Uterus (tissue), 4 donors: ENCODE measurements at regions of chr2 and their contacts with region 1.

Region 1: GRCh38 chr2:36355151-36355889 is at the start of gene CRIM1:
- DNase-seq: peak; percentile 88 to 89
- H3K4me3 ChIP-seq: peak within 1 kb of the TSS; percentile 62 to 87
- H3K27ac ChIP-seq: peak within 1 kb of the TSS; percentile 93 to 96
- H3K4me1 ChIP-seq: peaks cover 0 to 10% of the 10 kb centered on the region in 2 donors
- H3K27me3 ChIP-seq: no peaks in the 10 kb centered on the region
- CTCF ChIP-seq: no peak
- POLR2A ChIP-seq: peak; percentile 93 to 96
- total RNA-seq, gene CRIM1: 51.2 to 168 (median 66.6) TPM

Region 2: GRCh38 chr2:36441816-36442215 is 86.5 kb after region 1 on chr2:
- intact Hi-C with region 1: loop called (anchors 10 kb)
- DNase-seq: peak in 1 of 2 donors; percentile 31
- H3K4me3 ChIP-seq: no peak overlapping the region
- H3K27ac ChIP-seq: peak overlapping the region; percentile 66 to 73
- H3K4me1 ChIP-seq: peaks cover 0 to 10% of the 10 kb centered on the region in 2 donors
- H3K27me3 ChIP-seq: no peaks in the 10 kb centered on the region
- CTCF ChIP-seq: no peak
- POLR2A ChIP-seq: no peak

Region 3: DNA sequence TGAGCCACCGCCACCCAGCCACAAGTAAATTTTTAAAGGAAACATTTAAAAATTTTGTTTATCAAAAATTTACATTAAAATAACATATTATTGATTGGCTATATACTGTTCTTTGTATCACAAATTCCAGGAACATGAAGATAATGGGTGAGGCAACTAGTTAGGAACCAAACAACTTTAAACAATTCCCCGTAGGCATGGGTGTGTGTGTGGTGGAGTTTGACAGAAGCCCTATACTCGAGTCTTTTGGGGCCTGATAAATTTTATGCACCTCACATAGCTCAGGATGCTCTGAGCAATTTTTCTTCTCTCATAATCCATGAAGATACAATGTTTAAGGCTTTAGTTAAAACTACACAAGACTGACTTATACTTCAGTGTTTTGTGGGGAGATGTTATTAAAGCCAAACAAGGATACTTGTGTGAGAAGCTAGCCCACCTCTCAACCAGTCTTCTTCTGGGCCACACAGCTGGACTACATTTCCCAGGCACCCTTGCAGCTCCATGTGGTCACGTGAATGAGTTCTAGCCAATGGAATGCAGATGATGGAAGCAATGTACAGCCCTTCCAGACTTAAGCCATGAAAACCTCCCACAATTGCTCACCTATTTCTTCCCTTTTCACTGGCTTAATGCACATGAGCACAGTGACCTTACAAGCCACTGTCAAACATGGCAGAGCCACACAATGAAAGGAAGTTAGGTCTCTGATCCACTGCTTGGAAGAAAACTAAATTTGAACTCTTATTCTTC is 262.9 kb after region 1 on chr2:
- intact Hi-C with region 1: no loop called
- DNase-seq: no peak
- H3K4me3 ChIP-seq: no peak overlapping the region
- H3K27ac ChIP-seq: no peak overlapping the region
- H3K4me1 ChIP-seq: no peaks in the 10 kb centered on the region
- H3K27me3 ChIP-seq: no peaks in the 10 kb centered on the region
- CTCF ChIP-seq: no peak
- POLR2A ChIP-seq: no peak

Region 4: DNA sequence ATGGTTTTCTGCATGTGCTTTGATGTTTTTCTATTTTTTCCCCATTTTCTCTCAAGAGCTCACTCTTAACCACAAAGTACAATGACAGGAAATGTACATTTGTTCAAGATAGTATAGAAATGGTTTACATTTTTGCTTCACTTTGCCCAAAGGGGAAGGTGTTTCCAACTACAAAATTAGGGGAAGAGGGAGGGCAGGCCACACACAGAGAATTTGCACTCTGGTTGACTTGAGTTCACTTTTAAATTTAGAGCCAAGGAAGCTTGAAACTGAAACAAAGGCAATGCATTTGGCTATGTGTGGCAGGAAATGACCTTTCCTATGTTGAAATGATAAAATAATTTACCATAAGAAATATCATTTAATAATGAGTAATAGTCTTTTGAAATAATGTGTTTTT is 322.1 kb after region 1 on chr2:
- intact Hi-C with region 1: no loop called
- DNase-seq: no peak
- H3K4me3 ChIP-seq: no peak overlapping the region
- H3K27ac ChIP-seq: no peak overlapping the region
- H3K4me1 ChIP-seq: no peaks in the 10 kb centered on the region
- H3K27me3 ChIP-seq: no peaks in the 10 kb centered on the region
- CTCF ChIP-seq: no peak
- POLR2A ChIP-seq: no peak

Region 5: DNA sequence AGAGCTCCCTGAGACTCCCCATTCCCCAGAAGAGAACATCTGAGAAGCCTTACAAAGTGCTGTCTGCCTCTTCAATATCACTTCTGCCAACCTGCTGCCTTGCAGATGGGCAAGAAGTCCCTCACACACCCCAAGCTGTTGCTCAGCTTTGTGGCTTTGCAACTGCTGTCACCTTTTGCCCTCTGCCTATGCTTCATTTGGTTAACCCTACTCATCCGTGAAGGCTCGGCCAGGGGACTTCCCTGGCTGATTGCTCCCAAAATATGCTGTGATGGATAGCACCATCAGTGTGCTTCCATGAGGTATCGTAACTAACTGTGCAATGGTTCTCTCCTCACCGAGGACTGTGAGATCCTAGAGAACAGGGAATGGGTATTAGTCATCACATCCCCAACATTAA is 1809.6 kb after region 1 on chr2:
- intact Hi-C with region 1: loop called (anchors 10 kb)
- DNase-seq: no peak
- H3K4me3 ChIP-seq: no peak overlapping the region
- H3K27ac ChIP-seq: peak overlapping the region in 1 of 2 donors; percentile 17
- H3K4me1 ChIP-seq: no peaks in the 10 kb centered on the region
- H3K27me3 ChIP-seq: no peaks in the 10 kb centered on the region
- CTCF ChIP-seq: no peak
- POLR2A ChIP-seq: no peak